Heart right ventricle (tissue), 16 donors: ENCODE measurements at regions of chr5 and their contacts with region 1.

Region 1: DNA sequence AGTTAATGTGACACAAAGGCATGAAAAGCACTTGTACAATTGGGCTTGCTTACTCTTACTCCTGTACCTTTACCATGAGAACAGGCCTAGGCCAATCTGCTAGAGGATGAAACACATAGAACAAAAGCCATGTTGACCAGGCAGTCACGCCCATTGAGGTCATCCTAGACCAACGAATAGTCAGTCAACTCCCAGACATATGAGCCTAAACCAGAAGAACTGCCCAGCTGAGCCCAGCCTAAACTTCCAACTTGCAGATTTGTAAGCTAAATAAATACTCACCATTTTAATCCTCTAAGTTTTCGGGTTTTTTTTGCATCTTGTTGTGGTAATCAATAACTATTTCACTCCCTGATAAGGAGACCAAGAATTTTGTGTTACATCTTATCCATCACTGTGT is 164.8 kb upstream of the ADRA1B start:
- DNase-seq: no peak
- ATAC-seq: no peak
- H3K4me3 ChIP-seq: no peak overlapping the region
- H3K27ac ChIP-seq: no peak overlapping the region
- H3K4me1 ChIP-seq: no peaks in the 10 kb centered on the region
- H3K27me3 ChIP-seq: no peaks in the 10 kb centered on the region
- CTCF ChIP-seq: no peak

Region 2: DNA sequence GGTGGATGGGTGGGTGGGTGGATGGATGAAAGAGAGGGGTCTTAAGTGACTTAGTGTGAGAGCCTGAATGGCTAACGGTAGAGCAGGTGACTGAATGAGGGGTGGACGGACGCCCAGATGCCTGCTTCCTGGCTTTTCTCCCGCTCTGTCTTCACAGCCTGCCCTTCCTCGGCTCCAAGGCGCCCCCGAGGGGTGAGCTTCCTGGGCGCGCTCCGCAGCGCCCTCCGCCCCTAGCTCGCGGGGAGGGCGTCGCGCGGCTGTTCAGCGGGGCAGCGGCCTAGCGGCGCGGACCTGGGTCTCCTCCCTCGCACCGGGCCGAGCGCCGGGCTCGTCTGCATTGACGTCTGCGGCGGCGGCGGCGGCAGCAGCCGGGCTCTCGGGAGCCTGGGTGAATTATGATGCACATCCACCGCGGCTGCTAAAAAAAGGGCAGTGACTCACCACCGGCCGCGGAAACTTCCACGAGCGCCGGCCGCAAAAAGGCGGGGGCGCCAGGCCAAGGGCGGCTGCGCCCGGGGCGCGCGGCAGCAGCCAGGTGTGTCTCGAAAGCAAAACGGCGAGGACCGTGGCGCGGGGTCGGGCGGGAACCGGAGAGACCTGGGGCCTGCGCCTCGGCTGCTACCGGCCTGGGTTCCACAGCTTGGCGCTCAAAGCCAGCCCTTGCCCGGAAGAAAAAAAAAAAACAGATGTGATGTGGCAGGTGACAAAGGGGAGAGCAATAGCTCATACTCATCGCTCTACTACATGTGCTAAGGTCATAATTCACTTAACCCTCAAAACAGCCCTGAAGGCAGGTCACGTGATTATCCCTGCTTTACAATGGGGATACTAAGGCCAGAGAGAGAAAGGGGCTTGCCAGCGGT is 21.8 kb after region 1 on chr5:
- intact Hi-C with region 1: loop called in 1 of 10 experiments (anchors 1 kb)
- DNase-seq: peak; percentile 77 to 78
- ATAC-seq: peak; percentile 93 to 98 (median 96)
- H3K4me3 ChIP-seq: peak overlapping the region in 9 of 10 donors; percentile 7 to 48 (median 43)
- H3K27ac ChIP-seq: peak overlapping the region in 9 of 10 donors; percentile 51 to 86 (median 83)
- H3K4me1 ChIP-seq: peaks cover 0 to 13% (median 0%) of the 10 kb centered on the region in 9 donors
- H3K27me3 ChIP-seq: peaks cover 0 to 28% (median 0%) of the 10 kb centered on the region in 7 donors
- CTCF ChIP-seq: peak in 6 of 9 donors; percentile 19 to 58 (median 42)

Region 3: GRCh38 chr5:159975462-159976019 is 224.1 kb after region 1 on chr5:
- intact Hi-C with region 1: no loop called
- DNase-seq: peak in 1 of 2 donors; percentile 27
- ATAC-seq: peak; percentile 75 to 91 (median 80)
- H3K4me3 ChIP-seq: no peak overlapping the region
- H3K27ac ChIP-seq: peak overlapping the region in 3 of 10 donors; percentile 9 to 48 (median 40)
- H3K4me1 ChIP-seq: peaks cover 0 to 13% (median 9%) of the 10 kb centered on the region in 9 donors
- H3K27me3 ChIP-seq: peaks cover 0 to 42% (median 25%) of the 10 kb centered on the region in 7 donors
- CTCF ChIP-seq: peak in 5 of 9 donors; percentile 21 to 37 (median 32)